ENCODE measurements at regions of chr9 and their contacts with region 1.

Region 1: DNA sequence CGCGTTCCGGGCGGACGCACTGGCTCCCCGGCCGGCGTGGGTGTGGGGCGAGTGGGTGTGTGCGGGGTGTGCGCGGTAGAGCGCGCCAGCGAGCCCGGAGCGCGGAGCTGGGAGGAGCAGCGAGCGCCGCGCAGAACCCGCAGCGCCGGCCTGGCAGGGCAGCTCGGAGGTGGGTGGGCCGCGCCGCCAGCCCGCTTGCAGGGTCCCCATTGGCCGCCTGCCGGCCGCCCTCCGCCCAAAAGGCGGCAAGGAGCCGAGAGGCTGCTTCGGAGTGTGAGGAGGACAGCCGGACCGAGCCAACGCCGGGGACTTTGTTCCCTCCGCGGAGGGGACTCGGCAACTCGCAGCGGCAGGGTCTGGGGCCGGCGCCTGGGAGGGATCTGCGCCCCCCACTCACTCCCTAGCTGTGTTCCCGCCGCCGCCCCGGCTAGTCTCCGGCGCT is at the start of gene DAPK1:
- ATAC-seq: peak; percentile 48 to 85 (median 78)
- H3K4me3 ChIP-seq: peak within 1 kb of the TSS; percentile 70 to 92 (median 71)
- H3K27ac ChIP-seq: peak within 1 kb of the TSS; percentile 81 to 86
- H3K4me1 ChIP-seq: peaks cover 3 to 32% of the 10 kb centered on the region in 2 donors
- total RNA-seq, gene DAPK1: 31.6 to 466 (median 50.0) TPM

Region 2: DNA sequence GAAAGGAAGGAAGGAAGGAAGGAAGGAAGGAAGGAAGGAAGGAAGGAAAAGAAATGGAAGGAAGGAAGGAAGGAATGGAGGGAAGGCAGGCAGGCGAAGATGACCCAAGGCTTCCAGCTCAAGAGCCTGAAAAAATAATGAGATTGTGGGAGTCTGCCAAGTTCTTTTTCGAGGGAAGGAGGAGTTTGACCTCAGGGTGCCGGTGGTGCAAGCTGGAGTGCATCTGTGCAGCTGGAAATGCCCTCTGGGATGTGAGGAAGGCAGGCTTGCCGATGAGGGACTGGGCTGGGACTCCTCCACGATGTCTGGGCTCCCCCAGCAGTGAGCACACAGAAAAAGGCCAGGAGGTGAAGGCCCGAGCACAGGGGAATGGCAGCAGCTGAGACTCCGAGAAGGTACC is 154.9 kb before region 1 on chr9:
- in situ Hi-C with region 1: loop called in 2 of 9 experiments (anchors 10 to 25 kb)
- ATAC-seq: peak in 2 of 8 experiments; percentile 7
- H3K4me3 ChIP-seq: no peak overlapping the region
- H3K27ac ChIP-seq: no peak overlapping the region
- H3K4me1 ChIP-seq: peaks cover 7 to 10% of the 10 kb centered on the region in 2 donors